ENCODE measurements at regions of chr9 and their contacts with region 1.

Region 1: DNA sequence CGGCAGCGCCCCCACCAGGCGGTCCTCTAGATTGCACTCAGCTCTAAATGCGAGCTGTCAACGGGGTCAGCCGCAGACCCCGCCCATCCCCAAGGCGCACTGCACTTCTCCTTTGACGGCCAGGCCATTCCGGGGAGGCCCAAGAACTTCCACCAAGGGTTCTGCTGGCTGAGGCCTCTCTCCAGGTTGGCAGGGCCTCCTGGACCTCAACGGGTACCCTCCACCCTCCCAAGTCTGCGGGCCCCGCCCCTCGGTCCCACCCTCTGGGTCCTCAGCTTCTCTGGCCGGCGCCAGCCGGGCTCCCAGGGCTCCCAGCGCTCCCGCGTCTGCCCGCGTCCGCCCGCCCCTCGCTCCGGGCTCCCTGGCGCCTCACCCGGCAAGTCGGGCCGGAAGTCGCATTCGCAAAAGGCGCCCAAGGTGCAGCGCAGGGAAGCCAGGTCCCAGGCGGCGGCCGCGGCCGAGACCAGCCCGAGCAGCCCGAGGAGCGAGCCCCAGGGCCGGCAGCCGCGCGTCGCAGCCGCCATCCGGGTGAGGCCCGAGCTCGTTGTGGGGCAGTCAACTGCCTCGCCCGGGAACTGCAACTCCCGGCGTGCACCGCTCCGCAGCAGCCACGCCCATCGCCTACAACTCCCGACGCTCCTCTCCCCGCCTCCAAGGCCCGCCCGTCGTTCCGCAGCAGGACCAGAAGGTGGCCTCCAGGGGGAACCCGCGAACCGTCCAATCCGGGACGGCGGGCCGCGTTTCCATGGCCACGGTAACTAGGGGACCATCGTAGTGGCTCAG is at the start of gene TOR2A:
- DNase-seq: peak; percentile 98 to 100 (median 99)
- H3K4me3 ChIP-seq: peak within 1 kb of the TSS; percentile 30 to 74
- H3K4me3 Mint-ChIP-seq: peak within 1 kb of the TSS; percentile 85 to 98 (median 92)
- H3K27ac ChIP-seq: peak within 1 kb of the TSS; percentile 80
- H3K27ac Mint-ChIP-seq: peak within 1 kb of the TSS; percentile 88 to 99 (median 97)
- H3K4me1 ChIP-seq: peaks cover 18% of the 10 kb centered on the region
- H3K4me1 Mint-ChIP-seq: peaks cover 7 to 27% (median 18%) of the 10 kb centered on the region in 4 donors
- H3K27me3 ChIP-seq: no peaks in the 10 kb centered on the region
- H3K27me3 Mint-ChIP-seq: no peaks in the 10 kb centered on the region
- total RNA-seq, gene TOR2A: 14.3 to 18.4 TPM

Region 2: GRCh38 chr9:127503947-127504782 is 230.8 kb before region 1 on chr9:
- CTCF ChIA-PET with region 1: interaction called, 14 read pairs
- POLR2A ChIA-PET with region 1: no interaction called
- intact Hi-C with region 1: loop called (anchors 1 kb)
- DNase-seq: peak; percentile 74 to 76 (median 75)
- H3K4me3 ChIP-seq: no peak overlapping the region
- H3K4me3 Mint-ChIP-seq: no peak overlapping the region
- H3K27ac ChIP-seq: no peak overlapping the region
- H3K27ac Mint-ChIP-seq: peak overlapping the region in 4 of 7 donors; percentile 12 to 84 (median 70)
- H3K4me1 ChIP-seq: no peaks in the 10 kb centered on the region
- H3K4me1 Mint-ChIP-seq: peaks cover 0 to 5% (median 2%) of the 10 kb centered on the region in 4 donors
- H3K27me3 ChIP-seq: no peaks in the 10 kb centered on the region
- H3K27me3 Mint-ChIP-seq: no peaks in the 10 kb centered on the region

Region 3: DNA sequence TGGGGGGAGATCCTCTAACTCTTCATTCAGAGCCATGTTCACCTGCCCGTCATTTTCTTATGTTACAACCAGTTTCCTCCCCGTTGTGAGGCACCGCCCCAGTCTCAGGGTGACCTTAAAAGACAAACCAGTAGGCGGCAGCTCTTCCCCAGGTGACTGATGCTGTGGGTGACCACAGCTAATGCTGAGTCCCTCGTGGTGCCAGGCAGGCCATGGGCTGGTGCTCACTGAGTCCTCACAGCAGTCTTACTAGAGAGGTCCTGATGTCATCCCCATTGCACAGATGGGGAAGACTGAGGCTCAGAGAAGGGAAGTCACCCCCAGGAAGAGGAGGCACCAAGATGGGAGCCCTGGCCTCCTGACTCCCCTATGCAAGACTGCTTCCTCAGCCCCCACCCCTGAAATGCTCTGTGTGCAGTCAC is 27.2 kb before region 1 on chr9:
- CTCF ChIA-PET with region 1: interaction called, 19 read pairs
- POLR2A ChIA-PET with region 1: interaction called, 7 read pairs
- intact Hi-C with region 1: loop called (anchors 1 kb)
- DNase-seq: peak; percentile 42 to 60 (median 59)
- H3K4me3 ChIP-seq: no peak overlapping the region
- H3K4me3 Mint-ChIP-seq: no peak overlapping the region
- H3K27ac ChIP-seq: no peak overlapping the region
- H3K27ac Mint-ChIP-seq: peak overlapping the region in 4 of 7 donors; percentile 21 to 74 (median 61)
- H3K4me1 ChIP-seq: peaks cover 22% of the 10 kb centered on the region
- H3K4me1 Mint-ChIP-seq: peaks cover 12 to 30% (median 22%) of the 10 kb centered on the region in 4 donors
- H3K27me3 ChIP-seq: no peaks in the 10 kb centered on the region
- H3K27me3 Mint-ChIP-seq: no peaks in the 10 kb centered on the region

Region 4: DNA sequence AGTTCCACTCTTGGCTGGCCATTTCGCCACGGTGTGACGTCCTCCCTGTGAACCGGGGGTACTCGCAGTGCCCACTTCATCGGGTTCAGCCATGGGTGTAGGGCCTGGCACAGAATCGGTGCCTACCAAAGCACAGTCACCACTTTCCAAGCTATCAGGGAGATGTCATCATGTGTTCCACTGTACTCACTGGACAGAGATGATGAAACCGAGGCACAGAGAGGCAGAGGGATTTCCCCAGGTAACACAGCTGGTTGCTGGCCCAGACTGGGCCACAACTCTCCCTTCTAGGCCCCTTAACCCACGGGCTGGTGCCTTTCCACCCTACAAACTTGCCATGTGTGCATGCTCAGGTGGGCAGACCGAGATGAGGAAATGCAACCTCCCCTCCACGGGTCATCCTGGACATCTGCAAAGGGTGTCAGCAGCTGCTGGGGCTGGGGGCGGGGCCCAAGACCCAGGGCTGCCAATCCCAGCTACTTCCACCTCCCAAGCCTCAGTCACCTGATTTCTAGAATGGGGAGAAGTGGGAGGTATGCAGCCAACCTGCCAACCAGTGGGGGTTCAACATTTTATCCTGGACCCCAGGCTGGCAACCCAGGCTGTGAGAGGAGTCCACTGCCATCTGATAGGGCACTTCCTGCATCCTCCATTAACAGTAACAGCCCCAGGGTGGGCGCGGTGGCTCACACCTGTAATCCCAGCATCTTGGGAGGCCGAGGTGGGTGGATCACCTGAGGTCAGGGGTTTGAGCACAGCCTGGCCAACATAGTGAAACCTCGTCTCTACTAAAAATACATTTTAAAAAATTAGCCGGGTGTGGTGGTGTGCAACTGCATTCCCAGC is 44.4 kb after region 1 on chr9:
- CTCF ChIA-PET with region 1: interaction called, 43 read pairs
- POLR2A ChIA-PET with region 1: interaction called, 81 read pairs
- intact Hi-C with region 1: no loop called
- DNase-seq: peak in 1 of 5 donors; percentile 86
- H3K4me3 ChIP-seq: peak overlapping the region; percentile 49 to 63
- H3K4me3 Mint-ChIP-seq: peak overlapping the region; percentile 83 to 100 (median 100)
- H3K27ac ChIP-seq: peak overlapping the region; percentile 91
- H3K27ac Mint-ChIP-seq: peak overlapping the region; percentile 96 to 98 (median 97)
- H3K4me1 ChIP-seq: peaks cover 80% of the 10 kb centered on the region
- H3K4me1 Mint-ChIP-seq: peaks cover 29 to 84% (median 61%) of the 10 kb centered on the region in 4 donors
- H3K27me3 ChIP-seq: no peaks in the 10 kb centered on the region
- H3K27me3 Mint-ChIP-seq: no peaks in the 10 kb centered on the region

Region 5: DNA sequence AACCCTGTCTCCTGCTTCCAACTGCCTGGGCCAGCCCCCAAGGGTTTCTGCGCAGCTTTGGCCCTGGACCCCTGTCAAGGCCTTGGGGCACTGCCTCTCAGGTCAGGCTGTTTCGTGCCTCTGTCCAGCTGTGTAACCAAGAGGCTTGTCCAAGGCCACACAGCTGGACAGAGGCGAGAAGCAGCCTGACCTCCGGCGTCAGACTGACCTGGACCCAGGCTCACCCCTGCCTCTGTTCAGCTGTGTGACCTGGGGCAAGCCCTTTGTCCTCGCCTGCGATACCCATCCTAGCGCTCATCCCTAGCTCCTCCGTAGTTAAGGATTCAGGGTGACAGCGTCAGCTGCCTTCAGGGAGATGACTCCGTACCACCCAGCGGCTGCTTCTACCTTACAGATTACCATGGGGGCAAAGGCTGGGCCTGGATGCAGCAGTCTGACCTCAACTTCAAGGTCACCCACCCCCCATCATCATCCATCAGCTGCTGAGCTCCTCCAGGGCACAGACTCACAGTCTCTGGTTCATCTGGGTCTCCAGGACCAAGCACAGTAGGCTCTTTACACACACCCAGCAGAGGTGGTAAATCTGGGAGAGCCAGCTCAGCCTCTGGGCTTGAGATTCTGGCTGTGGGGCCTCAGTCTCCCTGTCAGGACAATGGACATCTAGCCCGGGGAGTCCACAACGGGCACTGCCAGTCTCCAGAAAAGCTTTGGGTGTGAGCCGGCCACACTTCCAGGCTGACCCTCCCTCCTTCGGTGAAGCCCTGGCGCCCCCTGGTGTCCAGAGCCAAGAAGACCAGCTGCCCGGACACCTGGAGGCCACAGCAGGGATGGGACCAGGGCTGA is 134.6 kb after region 1 on chr9:
- CTCF ChIA-PET with region 1: interaction called, 38 read pairs
- POLR2A ChIA-PET with region 1: interaction called, 20 read pairs
- intact Hi-C with region 1: loop called (anchors 1 kb)
- DNase-seq: peak; percentile 61 to 76 (median 63)
- H3K4me3 ChIP-seq: no peak overlapping the region
- H3K4me3 Mint-ChIP-seq: no peak overlapping the region
- H3K27ac ChIP-seq: no peak overlapping the region
- H3K27ac Mint-ChIP-seq: peak overlapping the region in 2 of 7 donors; percentile 31 to 53
- H3K4me1 ChIP-seq: peaks cover 20% of the 10 kb centered on the region
- H3K4me1 Mint-ChIP-seq: peaks cover 13 to 20% (median 15%) of the 10 kb centered on the region in 4 donors
- H3K27me3 ChIP-seq: no peaks in the 10 kb centered on the region
- H3K27me3 Mint-ChIP-seq: no peaks in the 10 kb centered on the region

Region 6: GRCh38 chr9:127916665-127917613 is 182.0 kb after region 1 on chr9 and contains the start of gene ST6GALNAC4:
- CTCF ChIA-PET with region 1: interaction called, 68 read pairs
- POLR2A ChIA-PET with region 1: interaction called, 15 read pairs
- intact Hi-C with region 1: loop called (anchors 1 kb)
- DNase-seq: peak; percentile 90 to 93 (median 91)
- H3K4me3 ChIP-seq: peak within 1 kb of the TSS; percentile 66 to 76
- H3K4me3 Mint-ChIP-seq: peak within 1 kb of the TSS; percentile 78 to 88 (median 84)
- H3K27ac ChIP-seq: peak within 1 kb of the TSS; percentile 52
- H3K27ac Mint-ChIP-seq: peak within 1 kb of the TSS; percentile 63 to 84 (median 79)
- H3K4me1 ChIP-seq: peaks cover 38% of the 10 kb centered on the region
- H3K4me1 Mint-ChIP-seq: peaks cover 12 to 65% (median 39%) of the 10 kb centered on the region in 4 donors
- H3K27me3 ChIP-seq: no peaks in the 10 kb centered on the region
- H3K27me3 Mint-ChIP-seq: no peaks in the 10 kb centered on the region
- total RNA-seq, gene ST6GALNAC4: 35.7 to 38.1 TPM